ENCODE measurements at regions of chr2 and their contacts with region 1.

Region 1: DNA sequence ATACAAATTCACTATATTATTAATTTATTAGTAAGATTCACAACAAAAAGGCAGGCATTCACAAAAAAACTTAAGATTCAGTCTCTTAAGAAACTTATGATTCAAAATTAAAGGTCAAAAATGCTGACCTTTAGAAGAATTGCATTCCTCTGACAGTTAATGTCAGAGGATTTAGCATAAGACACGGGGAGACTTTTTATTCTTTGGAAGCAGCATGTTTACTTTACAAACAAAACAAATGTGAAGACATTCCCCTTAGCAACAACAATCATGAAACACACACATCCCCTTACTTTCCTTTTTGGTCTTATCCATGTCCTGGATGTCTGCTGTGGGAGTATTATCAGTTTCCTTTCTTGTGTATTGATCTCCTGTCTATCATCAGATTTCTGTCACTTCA is 117.1 kb downstream of the RAD51AP2 start:
- DNase-seq: no peak
- ATAC-seq: no peak
- H3K4me3 ChIP-seq: no peak overlapping the region
- H3K4me3 Mint-ChIP-seq: no peak overlapping the region
- H3K27ac ChIP-seq: no peak overlapping the region
- H3K27ac Mint-ChIP-seq: no peak overlapping the region
- H3K4me1 ChIP-seq: no peaks in the 10 kb centered on the region
- H3K4me1 Mint-ChIP-seq: no peaks in the 10 kb centered on the region
- H3K27me3 ChIP-seq: no peaks in the 10 kb centered on the region
- H3K27me3 Mint-ChIP-seq: no peaks in the 10 kb centered on the region
- CTCF ChIP-seq: no peak

Region 2: DNA sequence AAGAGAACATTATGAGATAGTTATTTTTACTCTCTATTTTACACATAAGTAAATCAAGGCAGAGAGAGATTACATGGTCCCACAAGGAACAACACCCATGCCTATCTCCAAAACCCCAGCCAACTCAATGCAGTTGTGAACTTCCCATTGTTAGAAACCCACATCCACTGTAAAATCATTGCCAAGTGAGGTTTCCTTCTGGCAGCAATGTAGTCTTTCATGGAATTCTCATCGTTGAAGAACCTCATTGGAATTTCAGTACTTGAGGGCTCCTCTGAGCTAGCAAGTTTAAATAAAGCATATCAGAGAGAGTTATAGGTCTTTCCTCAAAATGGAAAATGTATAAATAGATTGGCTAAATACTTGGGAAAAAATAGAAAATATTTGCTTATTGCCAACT is 11.9 kb after region 1 on chr2:
- CTCF ChIA-PET with region 1: interaction called, 3 read pairs
- POLR2A ChIA-PET with region 1: no interaction called
- intact Hi-C with region 1: loop called in 1 of 2 experiments (anchors 1 kb)
- DNase-seq: no peak
- ATAC-seq: no peak
- H3K4me3 ChIP-seq: no peak overlapping the region
- H3K4me3 Mint-ChIP-seq: no peak overlapping the region
- H3K27ac ChIP-seq: no peak overlapping the region
- H3K27ac Mint-ChIP-seq: no peak overlapping the region
- H3K4me1 ChIP-seq: no peaks in the 10 kb centered on the region
- H3K4me1 Mint-ChIP-seq: no peaks in the 10 kb centered on the region
- H3K27me3 ChIP-seq: no peaks in the 10 kb centered on the region
- H3K27me3 Mint-ChIP-seq: no peaks in the 10 kb centered on the region
- CTCF ChIP-seq: no peak

Region 3: DNA sequence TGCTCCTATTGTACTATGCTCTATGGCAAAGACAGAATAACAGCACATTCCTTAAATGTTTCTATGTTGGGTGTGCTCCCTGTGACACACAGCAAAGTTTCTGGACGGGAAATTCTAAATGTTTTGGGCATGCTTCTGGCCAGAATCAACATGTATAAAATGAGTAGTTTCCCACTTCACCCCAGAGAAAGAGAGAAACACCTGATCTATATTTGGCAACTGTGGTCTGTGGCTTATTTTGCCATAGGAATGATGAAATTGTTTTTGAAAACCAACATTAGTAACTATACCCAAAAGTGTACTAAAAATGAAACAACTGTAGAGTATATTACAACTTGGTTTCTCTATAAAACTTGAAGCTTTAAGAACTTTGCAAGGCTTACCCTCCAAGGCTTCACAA is 28.0 kb after region 1 on chr2:
- CTCF ChIA-PET with region 1: no interaction called
- POLR2A ChIA-PET with region 1: no interaction called
- intact Hi-C with region 1: no loop called
- DNase-seq: no peak
- ATAC-seq: no peak
- H3K4me3 ChIP-seq: no peak overlapping the region
- H3K4me3 Mint-ChIP-seq: no peak overlapping the region
- H3K27ac ChIP-seq: no peak overlapping the region
- H3K27ac Mint-ChIP-seq: no peak overlapping the region
- H3K4me1 ChIP-seq: no peaks in the 10 kb centered on the region
- H3K4me1 Mint-ChIP-seq: no peaks in the 10 kb centered on the region
- H3K27me3 ChIP-seq: no peaks in the 10 kb centered on the region
- H3K27me3 Mint-ChIP-seq: no peaks in the 10 kb centered on the region
- CTCF ChIP-seq: no peak

Region 4: GRCh38 chr2:17544256-17544655 is 143.2 kb after region 1 on chr2:
- CTCF ChIA-PET with region 1: no interaction called
- POLR2A ChIA-PET with region 1: no interaction called
- intact Hi-C with region 1: no loop called
- DNase-seq: no peak
- ATAC-seq: no peak
- H3K4me3 ChIP-seq: no peak overlapping the region
- H3K4me3 Mint-ChIP-seq: no peak overlapping the region
- H3K27ac ChIP-seq: no peak overlapping the region
- H3K27ac Mint-ChIP-seq: no peak overlapping the region
- H3K4me1 ChIP-seq: no peaks in the 10 kb centered on the region
- H3K4me1 Mint-ChIP-seq: no peaks in the 10 kb centered on the region
- H3K27me3 ChIP-seq: peaks cover 25 to 38% of the 10 kb centered on the region in 2 experiments
- H3K27me3 Mint-ChIP-seq: peaks cover 72% of the 10 kb centered on the region
- CTCF ChIP-seq: no peak